ENCODE measurements at regions of chr19 and their contacts with region 1.

Region 1: DNA sequence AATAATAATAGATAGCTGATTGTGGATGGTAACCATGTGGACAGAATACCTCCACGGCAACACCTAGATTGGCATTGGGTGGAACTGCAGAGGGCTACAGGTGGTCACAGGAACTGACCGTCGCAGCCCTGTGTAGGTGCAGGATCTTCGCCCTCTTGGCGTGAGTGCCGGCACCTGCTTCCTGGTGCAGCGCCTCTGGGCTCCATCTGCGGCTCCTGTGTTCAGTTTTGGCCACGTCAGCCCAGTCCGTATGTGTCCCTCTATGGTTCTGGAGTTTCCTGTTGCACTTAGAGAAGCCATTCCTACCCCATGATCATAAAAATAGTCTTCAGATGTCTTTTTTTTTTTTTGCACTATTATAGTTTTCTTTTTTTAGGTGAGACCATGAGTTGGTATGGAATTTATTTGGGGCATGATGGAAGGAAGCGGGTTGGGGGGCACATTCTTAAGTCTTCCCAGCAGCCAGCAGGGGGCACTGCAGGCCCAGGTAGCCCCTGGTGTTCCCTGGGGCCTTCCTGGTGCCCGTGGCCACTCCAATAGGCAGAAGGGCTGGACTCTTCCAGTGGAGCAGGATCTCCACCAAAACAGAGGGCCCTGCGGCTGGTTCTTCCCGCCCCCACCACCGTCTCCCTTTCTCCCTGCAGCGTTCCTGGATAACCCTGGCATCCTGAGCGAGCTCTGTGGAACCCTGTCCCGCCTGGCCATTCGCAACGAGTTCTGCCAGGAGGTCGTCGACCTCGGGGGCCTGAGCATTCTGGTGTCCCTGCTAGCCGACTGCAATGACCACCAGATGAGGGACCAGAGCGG is 10.1 kb upstream of the SLC25A42 start:
- DNase-seq: peak; percentile 74
- H3K4me3 Mint-ChIP-seq: no peak overlapping the region
- H3K27ac Mint-ChIP-seq: no peak overlapping the region
- H3K4me1 Mint-ChIP-seq: no peaks in the 10 kb centered on the region
- H3K27me3 Mint-ChIP-seq: no peaks in the 10 kb centered on the region

Region 2: GRCh38 chr19:19105365-19106055 is 51.8 kb after region 1 on chr19:
- CTCF ChIA-PET with region 1: no interaction called
- DNase-seq: no peak
- H3K4me3 Mint-ChIP-seq: no peak overlapping the region
- H3K27ac Mint-ChIP-seq: peak overlapping the region; percentile 12
- H3K4me1 Mint-ChIP-seq: no peaks in the 10 kb centered on the region
- H3K27me3 Mint-ChIP-seq: no peaks in the 10 kb centered on the region

Region 3: DNA sequence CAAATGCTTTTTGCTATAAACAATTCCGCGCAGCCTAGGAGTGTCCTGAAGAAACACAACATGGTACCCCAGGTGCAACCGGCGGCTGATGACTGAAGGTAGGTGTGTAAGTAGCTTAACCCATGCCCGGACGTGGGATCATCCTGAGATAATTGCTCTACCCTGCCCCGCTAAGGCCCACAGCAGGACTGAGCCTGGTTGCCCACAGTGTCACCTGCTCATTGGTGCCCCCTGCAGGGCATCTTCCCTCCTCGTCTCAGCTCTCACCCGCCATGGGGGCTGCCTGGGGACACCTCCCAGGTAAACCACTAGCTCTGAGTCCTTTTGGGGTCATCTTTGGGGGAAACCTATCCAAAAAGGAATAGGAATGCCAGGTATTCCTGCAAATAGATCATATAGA is 62.2 kb after region 1 on chr19:
- CTCF ChIA-PET with region 1: interaction called, 13 read pairs
- DNase-seq: peak; percentile 67
- H3K4me3 Mint-ChIP-seq: no peak overlapping the region
- H3K27ac Mint-ChIP-seq: no peak overlapping the region
- H3K4me1 Mint-ChIP-seq: no peaks in the 10 kb centered on the region
- H3K27me3 Mint-ChIP-seq: no peaks in the 10 kb centered on the region

Region 4: GRCh38 chr19:19155495-19156219 is 101.9 kb after region 1 on chr19:
- CTCF ChIA-PET with region 1: no interaction called
- DNase-seq: no peak
- H3K4me3 Mint-ChIP-seq: no peak overlapping the region
- H3K27ac Mint-ChIP-seq: peak overlapping the region; percentile 16
- H3K4me1 Mint-ChIP-seq: no peaks in the 10 kb centered on the region
- H3K27me3 Mint-ChIP-seq: no peaks in the 10 kb centered on the region

Measured in activated naive CD4-positive, alpha-beta T cell treated with anti-CD3 and anti-CD28 coated beads, Interleukin-2, amount 10 ng/mL, durations not matched to agents 7 days and 5 days (primary cell).